GM13977 (cell line): ENCODE measurements at regions of chr6 and their contacts with region 1.

Region 1: GRCh38 chr6:87799651-87800050 is 97.6 kb upstream of the AKIRIN2 start:
- DNase-seq: no peak
- CTCF ChIP-seq: no peak

Region 2: GRCh38 chr6:87553159-87553765 is 246.4 kb before region 1 on chr6:
- in situ Hi-C with region 1: no loop called
- DNase-seq: no peak
- CTCF ChIP-seq: no peak

Region 3: DNA sequence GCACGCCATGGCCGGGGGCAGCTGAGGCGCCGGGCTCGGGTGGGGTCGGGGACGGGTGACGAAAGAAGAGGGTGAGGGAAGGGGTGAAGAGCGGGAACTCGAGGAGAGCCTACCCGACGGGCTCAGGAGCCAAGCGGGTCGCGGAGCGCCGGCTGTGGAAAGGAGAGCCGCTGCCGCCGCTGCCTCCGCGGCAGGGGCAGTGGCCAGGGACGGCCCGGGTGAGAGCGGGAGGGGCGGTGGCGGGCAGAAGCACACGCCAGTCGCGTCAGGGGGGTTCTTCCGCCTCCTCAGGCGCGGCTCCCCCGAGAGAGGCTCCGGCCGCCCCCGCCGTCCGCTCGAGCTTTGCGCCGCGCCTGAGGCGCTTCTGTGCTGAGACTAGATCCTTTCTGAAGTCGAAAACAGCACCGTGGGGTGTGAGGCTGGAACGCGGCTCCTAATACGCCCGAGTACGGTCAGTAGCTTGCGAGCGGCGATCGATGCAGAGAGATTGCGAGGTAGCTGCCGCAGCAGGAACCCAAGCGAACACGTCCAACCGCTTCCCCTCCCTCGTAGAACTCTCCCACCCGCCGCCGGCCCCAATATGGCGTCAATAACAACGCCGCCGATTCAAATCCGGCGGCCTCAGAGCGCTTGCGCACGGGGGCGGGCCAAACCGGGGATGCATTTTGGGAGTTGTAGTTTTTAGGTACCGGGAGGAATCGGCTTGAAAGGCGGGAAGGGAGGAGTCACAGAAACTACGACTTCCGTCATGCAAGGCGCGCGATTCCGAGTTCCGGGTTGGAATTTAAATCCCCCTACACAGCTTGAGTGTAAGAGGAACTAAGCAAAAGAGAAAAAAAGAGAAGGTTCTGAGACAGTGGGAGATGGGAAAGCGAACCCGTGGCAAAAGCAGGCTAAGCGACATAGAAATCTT is 97.7 kb before region 1 on chr6 and contains the start of gene AKIRIN2:
- in situ Hi-C with region 1: loop called (anchors 10 kb)
- DNase-seq: peak; percentile 90
- CTCF ChIP-seq: no peak